ENCODE measurements at regions of chr6 and their contacts with region 1.

Region 1: GRCh38 chr6:133184798-133185372 is 56.3 kb upstream of the EYA4 start:
- DNase-seq: no peak
- ATAC-seq: no peak

Region 2: GRCh38 chr6:132011582-132011981 is 1173.3 kb before region 1 on chr6:
- intact Hi-C with region 1: no loop called
- DNase-seq: no peak
- ATAC-seq: peak; percentile 83

Region 3: DNA sequence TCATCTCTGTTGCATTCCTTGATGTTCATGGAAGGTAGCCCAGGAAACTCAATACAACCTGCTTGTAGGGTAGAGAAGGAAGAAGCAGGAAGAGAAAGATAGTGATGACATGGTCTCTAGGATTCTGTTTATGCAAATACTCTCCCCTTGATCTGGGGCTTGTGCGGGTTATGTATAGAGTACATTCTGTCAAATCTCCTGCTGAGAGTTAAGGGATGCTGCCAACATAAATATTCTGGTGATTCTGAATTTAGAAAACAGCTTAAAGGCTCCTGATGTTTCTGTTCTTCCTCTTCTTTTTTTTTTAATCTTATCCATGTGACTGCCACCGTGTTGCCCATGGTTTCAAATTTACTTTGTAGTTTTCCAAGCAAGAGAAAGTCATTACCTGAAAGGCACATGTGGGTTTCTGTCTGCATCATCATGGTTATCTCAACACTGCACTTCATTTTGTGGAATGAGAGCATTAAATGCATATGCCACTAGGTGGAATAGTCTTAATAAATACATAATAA is 220.0 kb before region 1 on chr6:
- intact Hi-C with region 1: loop called (anchors 5 kb)
- DNase-seq: no peak
- ATAC-seq: no peak

Region 4: DNA sequence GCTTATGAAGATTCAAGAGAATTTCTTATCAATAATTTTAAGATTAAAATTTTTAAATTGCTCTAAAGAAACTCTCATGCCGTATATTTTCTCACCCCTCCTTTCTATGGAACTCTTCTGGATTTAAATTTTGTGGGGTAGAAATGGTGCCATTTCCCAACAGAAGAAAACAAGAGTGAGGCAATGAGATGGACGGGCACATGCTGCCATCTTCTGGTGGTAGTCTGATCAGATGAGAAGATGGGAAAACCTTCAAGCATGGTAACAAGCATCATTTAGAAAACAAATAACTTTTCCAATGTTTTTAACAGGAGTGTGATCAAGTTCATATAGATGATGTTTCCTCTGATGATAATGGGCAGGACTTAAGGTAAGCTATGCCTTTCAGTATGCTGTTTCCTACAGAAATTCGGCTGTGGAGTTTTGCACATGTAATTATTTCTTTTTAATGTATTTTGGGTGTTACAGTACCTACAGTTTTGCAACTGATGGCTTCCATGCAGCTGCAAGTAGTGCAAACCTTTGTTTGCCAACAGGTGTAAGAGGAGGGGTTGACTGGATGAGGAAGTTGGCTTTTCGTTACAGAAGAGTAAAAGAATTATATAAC is 327.6 kb after region 1 on chr6:
- intact Hi-C with region 1: loop called (anchors 10 kb)
- DNase-seq: peak; percentile 55
- ATAC-seq: peak; percentile 41

Region 5: DNA sequence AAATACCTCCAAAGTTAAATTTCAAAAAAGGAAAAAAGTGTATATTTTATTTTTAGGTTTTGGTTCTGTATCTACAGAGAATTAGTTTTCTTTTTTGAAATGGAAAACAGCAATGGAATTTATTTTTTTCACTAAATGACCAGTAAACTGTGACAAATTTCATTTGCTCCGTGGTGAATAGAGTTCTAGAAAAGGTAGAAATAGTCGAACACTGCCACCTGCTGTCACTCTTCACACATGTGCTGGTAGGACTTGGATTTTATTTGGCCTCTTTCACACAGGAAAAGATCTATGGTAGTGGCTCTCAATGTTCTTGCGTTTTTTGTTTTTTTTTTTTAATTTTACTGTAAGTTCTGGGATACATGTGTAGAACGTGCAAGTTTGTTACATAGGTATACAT is 368.8 kb after region 1 on chr6:
- intact Hi-C with region 1: loop called (anchors 10 kb)
- DNase-seq: no peak
- ATAC-seq: peak; percentile 62